GM12878 (cell line): ENCODE measurements at regions of chr16 and their contacts with region 1.

Region 1: GRCh38 chr16:58399718-58400633 is 7.7 kb downstream of the GINS3 start:
- DNase-seq: no peak
- ATAC-seq: no peak
- H3K4me3 ChIP-seq: no peak overlapping the region
- H3K27ac ChIP-seq: no peak overlapping the region
- H3K4me1 ChIP-seq: no peaks in the 10 kb centered on the region
- H3K27me3 ChIP-seq: no peaks in the 10 kb centered on the region
- CTCF ChIP-seq: no peak
- EP300 ChIP-seq: no peak
- POLR2A ChIP-seq: no peak
- RAD21 ChIP-seq: no peak

Region 2: DNA sequence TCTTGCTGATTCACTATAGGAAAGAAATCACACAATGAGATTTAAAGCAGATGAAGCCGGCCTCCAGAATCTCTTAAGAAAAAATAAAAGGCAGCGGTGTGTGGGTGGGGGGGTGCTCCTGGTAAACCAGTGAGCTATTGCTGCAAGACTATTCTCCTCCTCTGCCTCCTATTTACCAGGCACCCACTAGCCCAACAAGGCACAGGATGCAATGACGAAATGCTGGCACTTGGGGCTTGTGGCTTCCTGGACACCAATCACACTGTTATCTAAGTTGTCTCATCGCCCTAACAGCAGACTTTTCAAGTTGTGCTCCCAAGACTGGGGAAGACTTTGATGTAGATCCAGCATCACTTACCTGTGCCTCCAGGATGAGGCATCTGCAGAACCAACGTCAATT is 49.8 kb after region 1 on chr16:
- CTCF ChIA-PET with region 1: no interaction called
- POLR2A ChIA-PET with region 1: no interaction called
- RAD21 ChIA-PET with region 1: no interaction called
- SMC1A ChIA-PET with region 1: interaction called, 4 read pairs
- in situ Hi-C with region 1: no loop called
- intact Hi-C with region 1: loop called (anchors 2 kb)
- DNase-seq: no peak
- ATAC-seq: no peak
- H3K4me3 ChIP-seq: no peak overlapping the region
- H3K27ac ChIP-seq: no peak overlapping the region
- H3K4me1 ChIP-seq: no peaks in the 10 kb centered on the region
- H3K27me3 ChIP-seq: no peaks in the 10 kb centered on the region
- CTCF ChIP-seq: no peak
- EP300 ChIP-seq: no peak
- POLR2A ChIP-seq: no peak
- RAD21 ChIP-seq: no peak

Region 3: GRCh38 chr16:58487566-58488351 is 87.8 kb after region 1 on chr16:
- CTCF ChIA-PET with region 1: no interaction called
- POLR2A ChIA-PET with region 1: no interaction called
- RAD21 ChIA-PET with region 1: no interaction called
- SMC1A ChIA-PET with region 1: no interaction called
- in situ Hi-C with region 1: no loop called
- intact Hi-C with region 1: no loop called
- DNase-seq: no peak
- ATAC-seq: peak; percentile 97
- H3K4me3 ChIP-seq: no peak overlapping the region
- H3K27ac ChIP-seq: no peak overlapping the region
- H3K4me1 ChIP-seq: no peaks in the 10 kb centered on the region
- H3K27me3 ChIP-seq: no peaks in the 10 kb centered on the region; a peak in 1 of 4 replicates
- CTCF ChIP-seq: peak; percentile 85 to 92 (median 90)
- EP300 ChIP-seq: no peak
- POLR2A ChIP-seq: no peak
- RAD21 ChIP-seq: peak; percentile 77